Heart left ventricle (tissue), 16 donors: ENCODE measurements at regions of chr16 and their contacts with region 1.

Region 1: GRCh38 chr16:75206749-75207451 is at the start of gene CTRB2:
- DNase-seq: peak in 1 of 5 donors; percentile 58
- ATAC-seq: peak in 1 of 4 donors; percentile 7
- H3K4me3 ChIP-seq: no peak within 1 kb of the TSS
- H3K27ac ChIP-seq: no peak within 1 kb of the TSS
- H3K4me1 ChIP-seq: no peaks in the 10 kb centered on the region
- H3K27me3 ChIP-seq: no peaks in the 10 kb centered on the region
- CTCF ChIP-seq: no peak
- POLR2A ChIP-seq: no peak
- total RNA-seq, gene CTRB2: 0.98 to 3.7 (median 2.8) TPM in 5 of 9 donors, not detected in the others

Region 2: DNA sequence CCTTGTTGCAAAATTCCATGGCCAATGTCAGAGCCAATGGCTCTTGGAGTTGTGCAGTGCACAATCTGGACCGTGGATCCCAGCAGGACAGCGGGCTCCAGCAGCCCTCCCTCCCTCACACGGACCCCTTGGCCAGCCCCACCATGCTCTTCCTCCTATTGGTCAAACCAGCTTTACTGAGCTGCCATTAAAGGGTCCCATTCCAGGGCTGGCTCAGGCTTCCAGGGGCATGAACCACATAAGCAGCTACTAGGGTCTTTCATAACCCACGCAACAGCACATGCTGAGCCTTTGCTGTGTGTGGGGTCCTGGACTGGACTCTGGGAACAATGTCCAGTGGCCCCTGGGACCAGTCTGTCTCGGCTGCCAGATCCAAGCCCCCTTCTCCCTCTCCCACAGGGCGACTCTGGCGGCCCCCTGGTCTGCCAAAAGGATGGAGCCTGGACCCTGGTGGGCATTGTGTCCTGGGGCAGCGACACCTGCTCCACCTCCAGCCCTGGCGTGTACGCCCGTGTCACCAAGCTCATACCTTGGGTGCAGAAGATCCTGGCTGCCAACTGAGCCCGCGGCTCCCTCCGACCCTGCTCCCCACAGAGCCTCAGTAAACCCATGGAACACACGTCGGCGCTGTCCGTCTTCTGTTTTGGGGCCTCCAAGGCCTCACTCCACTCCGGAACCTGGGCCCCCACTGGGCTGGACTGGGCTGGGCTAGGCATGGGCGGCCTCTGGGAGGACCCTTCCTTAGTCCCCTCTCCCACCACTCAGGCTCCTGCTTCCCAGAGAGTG is 17.6 kb after region 1 on chr16:
- intact Hi-C with region 1: loop called in 9 of 10 experiments (anchors 1 to 2 kb)
- DNase-seq: peak in 1 of 5 donors; percentile 10
- ATAC-seq: peak in 3 of 4 donors; percentile 3 to 5 (median 5)
- H3K4me3 ChIP-seq: no peak overlapping the region
- H3K27ac ChIP-seq: no peak overlapping the region
- H3K4me1 ChIP-seq: peaks cover 0 to 19% (median 0%) of the 10 kb centered on the region in 12 donors
- H3K27me3 ChIP-seq: peaks cover 0 to 8% (median 0%) of the 10 kb centered on the region in 9 donors
- CTCF ChIP-seq: no peak
- POLR2A ChIP-seq: no peak

Region 3: DNA sequence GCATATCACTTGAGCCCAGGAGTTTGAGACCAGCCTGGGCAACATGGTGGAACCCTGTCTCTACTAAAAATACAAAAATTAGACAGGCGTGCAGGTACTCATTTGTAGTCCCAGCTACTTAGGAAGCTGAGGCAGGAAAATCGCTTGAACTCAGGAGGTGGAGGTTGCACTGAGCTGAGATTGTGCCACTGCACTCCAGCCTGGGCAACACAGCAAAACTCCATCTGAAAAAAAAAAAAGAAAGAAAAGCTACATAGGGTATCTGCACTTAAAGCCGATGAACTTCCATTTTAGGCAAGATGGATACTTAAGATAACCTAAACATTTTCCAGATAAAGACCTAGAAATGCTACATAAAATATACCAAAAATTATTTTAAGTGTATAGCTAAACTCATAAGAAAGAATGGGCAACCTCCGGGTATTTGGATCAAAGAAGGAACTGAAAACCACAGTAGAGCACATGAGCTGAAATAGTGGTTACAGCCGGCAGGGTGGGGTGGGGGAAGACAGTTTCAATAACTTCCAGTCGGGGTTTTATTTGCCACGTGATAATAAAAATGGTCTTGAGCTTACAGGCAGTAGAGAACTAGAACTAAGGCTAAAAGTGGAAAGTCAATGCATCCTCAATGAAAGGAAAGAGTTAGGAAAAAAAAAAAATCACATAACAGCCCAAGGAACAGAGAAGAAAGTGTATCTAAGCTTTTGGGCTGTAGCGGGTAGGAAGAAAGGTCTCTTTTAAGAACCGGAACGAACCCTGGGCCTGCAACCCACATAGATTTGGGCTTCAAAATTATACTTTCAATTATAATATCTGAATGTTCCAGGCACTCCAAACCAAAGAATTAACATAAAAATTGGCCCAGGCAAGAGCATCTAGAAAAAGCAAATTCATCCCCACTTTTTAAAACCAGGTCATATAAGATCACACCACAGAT is 173.3 kb after region 1 on chr16:
- intact Hi-C with region 1: loop called in 3 of 10 experiments (anchors 5 kb)
- DNase-seq: no peak
- ATAC-seq: peak in 1 of 4 donors; percentile 45
- H3K4me3 ChIP-seq: no peak overlapping the region
- H3K27ac ChIP-seq: peak overlapping the region in 3 of 12 donors; percentile 14 to 35 (median 17)
- H3K4me1 ChIP-seq: peaks cover 0 to 49% (median 6%) of the 10 kb centered on the region in 12 donors
- H3K27me3 ChIP-seq: peaks cover 0 to 57% (median 0%) of the 10 kb centered on the region in 9 donors
- CTCF ChIP-seq: no peak
- POLR2A ChIP-seq: no peak

Region 4: DNA sequence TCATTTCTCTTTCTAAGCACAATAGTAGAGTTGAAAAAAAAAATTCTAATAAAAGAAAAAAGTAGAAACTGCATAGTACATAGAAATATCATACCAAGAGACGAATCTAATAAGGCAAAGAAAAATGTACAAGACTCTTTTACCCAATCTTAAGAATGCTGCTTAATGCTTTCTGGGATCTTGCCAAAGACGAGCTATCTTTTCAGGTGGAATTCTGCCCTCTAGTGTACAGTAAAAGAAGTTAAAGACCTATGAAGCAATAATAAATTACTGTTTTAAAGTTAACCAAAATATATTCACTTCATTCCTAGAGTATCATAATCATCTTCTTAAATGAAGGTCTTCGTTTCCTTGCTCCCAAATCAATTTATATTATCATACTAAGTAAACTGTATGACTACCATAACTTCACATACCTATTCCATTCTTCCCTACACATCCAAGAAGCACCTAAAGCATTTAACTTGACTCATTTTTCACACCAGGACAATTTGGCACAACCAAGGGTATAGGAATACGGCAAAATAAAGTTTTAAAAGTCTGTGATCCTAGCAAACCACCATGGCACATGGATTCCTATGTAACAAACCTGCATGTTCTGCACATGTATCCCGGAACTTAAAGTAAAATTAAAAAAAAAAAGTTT is 178.7 kb after region 1 on chr16:
- intact Hi-C with region 1: loop called in 3 of 10 experiments (anchors 5 kb)
- DNase-seq: peak in 1 of 5 donors; percentile 29
- ATAC-seq: no peak
- H3K4me3 ChIP-seq: no peak overlapping the region
- H3K27ac ChIP-seq: no peak overlapping the region
- H3K4me1 ChIP-seq: peaks cover 0 to 44% (median 18%) of the 10 kb centered on the region in 12 donors
- H3K27me3 ChIP-seq: peaks cover 0 to 18% (median 0%) of the 10 kb centered on the region in 9 donors
- CTCF ChIP-seq: peak; percentile 63 to 85 (median 74)
- POLR2A ChIP-seq: no peak

Region 5: GRCh38 chr16:75402821-75403475 is 196.0 kb after region 1 on chr16:
- intact Hi-C with region 1: loop called in 1 of 10 experiments (anchors 5 kb)
- DNase-seq: no peak
- ATAC-seq: peak in 3 of 4 donors; percentile 23 to 50 (median 50)
- H3K4me3 ChIP-seq: no peak overlapping the region
- H3K27ac ChIP-seq: peak overlapping the region; percentile 1 to 83 (median 66)
- H3K4me1 ChIP-seq: peaks cover 0 to 29% (median 20%) of the 10 kb centered on the region in 12 donors
- H3K27me3 ChIP-seq: no peaks in the 10 kb centered on the region
- CTCF ChIP-seq: peak; percentile 53 to 81 (median 66)
- POLR2A ChIP-seq: no peak

Region 6: GRCh38 chr16:75764154-75764768 is 557.4 kb after region 1 on chr16:
- intact Hi-C with region 1: loop called in 1 of 10 experiments (anchors 5 kb)
- DNase-seq: peak in 3 of 5 donors; percentile 40 to 50 (median 45)
- ATAC-seq: peak in 3 of 4 donors; percentile 90 to 95 (median 91)
- H3K4me3 ChIP-seq: no peak overlapping the region
- H3K27ac ChIP-seq: no peak overlapping the region
- H3K4me1 ChIP-seq: no peaks in the 10 kb centered on the region
- H3K27me3 ChIP-seq: no peaks in the 10 kb centered on the region
- CTCF ChIP-seq: peak; percentile 64 to 87 (median 78)
- POLR2A ChIP-seq: no peak